Heart right ventricle (tissue), 16 donors: ENCODE measurements at regions of chr12 and their contacts with region 1.

Region 1: GRCh38 chr12:105420659-105421240 is 90.3 kb downstream of the C12orf75 start:
- DNase-seq: peak; percentile 59 to 78
- ATAC-seq: peak; percentile 76 to 94 (median 91)
- H3K4me3 ChIP-seq: no peak overlapping the region
- H3K27ac ChIP-seq: no peak overlapping the region
- H3K4me1 ChIP-seq: peaks cover 0 to 10% (median 0%) of the 10 kb centered on the region in 9 donors
- H3K27me3 ChIP-seq: no peaks in the 10 kb centered on the region
- CTCF ChIP-seq: peak; percentile 74 to 99 (median 93)

Region 2: GRCh38 chr12:105357162-105357691 is 63.5 kb before region 1 on chr12:
- intact Hi-C with region 1: no loop called
- DNase-seq: no peak
- ATAC-seq: no peak
- H3K4me3 ChIP-seq: no peak overlapping the region
- H3K27ac ChIP-seq: no peak overlapping the region
- H3K4me1 ChIP-seq: peaks cover 0 to 11% (median 9%) of the 10 kb centered on the region in 9 donors
- H3K27me3 ChIP-seq: no peaks in the 10 kb centered on the region
- CTCF ChIP-seq: no peak

Region 3: GRCh38 chr12:105485321-105485910 is 64.7 kb after region 1 on chr12:
- intact Hi-C with region 1: loop called in 1 of 10 experiments (anchors 10 kb)
- DNase-seq: peak; percentile 25 to 37
- ATAC-seq: peak; percentile 43 to 95 (median 87)
- H3K4me3 ChIP-seq: no peak overlapping the region
- H3K27ac ChIP-seq: peak overlapping the region in 7 of 10 donors; percentile 9 to 65 (median 45)
- H3K4me1 ChIP-seq: peaks cover 0 to 32% (median 16%) of the 10 kb centered on the region in 9 donors
- H3K27me3 ChIP-seq: no peaks in the 10 kb centered on the region
- CTCF ChIP-seq: no peak

Region 4: GRCh38 chr12:105705765-105706164 is 285.0 kb after region 1 on chr12:
- intact Hi-C with region 1: loop called in 5 of 10 experiments (anchors 5 to 10 kb)
- DNase-seq: peak in 1 of 2 donors; percentile 74
- ATAC-seq: peak; percentile 34 to 79 (median 62)
- H3K4me3 ChIP-seq: no peak overlapping the region
- H3K27ac ChIP-seq: peak overlapping the region in 8 of 10 donors; percentile 22 to 64 (median 46)
- H3K4me1 ChIP-seq: peaks cover 0 to 21% (median 12%) of the 10 kb centered on the region in 9 donors
- H3K27me3 ChIP-seq: no peaks in the 10 kb centered on the region
- CTCF ChIP-seq: peak; percentile 62 to 95 (median 87)

Region 5: DNA sequence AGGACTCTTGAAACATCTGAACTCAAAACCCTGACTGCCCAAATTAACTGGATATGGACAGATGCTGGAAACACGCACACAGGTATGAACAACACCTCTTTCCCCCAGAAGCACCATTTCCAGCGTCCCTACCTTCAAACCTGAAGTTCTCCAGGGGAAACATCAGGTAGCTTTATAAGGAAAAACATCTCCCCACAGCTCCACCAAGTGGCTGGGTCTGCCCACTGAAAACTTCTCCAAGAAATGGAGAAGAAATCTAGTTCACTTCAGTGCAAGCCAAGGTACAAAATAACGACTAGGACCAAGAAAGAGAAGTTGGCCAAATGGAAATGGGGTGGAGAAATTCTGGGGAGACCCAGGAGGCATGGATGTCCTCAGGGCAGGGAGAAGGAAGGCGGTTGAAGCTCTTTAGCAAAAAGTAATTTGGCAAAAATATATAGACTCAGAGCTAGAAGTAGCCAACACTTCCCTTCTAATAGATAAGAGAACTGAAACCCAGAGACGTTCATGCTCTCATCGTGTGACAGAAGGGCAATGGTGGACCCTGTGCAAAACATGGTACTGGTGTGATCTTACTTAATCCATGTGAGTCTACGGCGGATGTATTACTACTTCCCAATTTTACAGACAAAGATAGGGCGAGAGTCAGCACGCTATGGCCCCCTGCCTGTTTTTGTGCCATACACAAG is 728.5 kb after region 1 on chr12:
- intact Hi-C with region 1: loop called in 2 of 10 experiments (anchors 5 kb)
- DNase-seq: no peak
- ATAC-seq: no peak
- H3K4me3 ChIP-seq: no peak overlapping the region
- H3K27ac ChIP-seq: peak overlapping the region in 2 of 10 donors; percentile 78 to 80
- H3K4me1 ChIP-seq: peaks cover 11 to 51% (median 30%) of the 10 kb centered on the region in 9 donors
- H3K27me3 ChIP-seq: no peaks in the 10 kb centered on the region
- CTCF ChIP-seq: peak in 8 of 9 donors; percentile 23 to 72 (median 54)

Region 6: GRCh38 chr12:106205208-106206071 is 784.7 kb after region 1 on chr12:
- intact Hi-C with region 1: loop called in 4 of 10 experiments (anchors 2 to 10 kb)
- DNase-seq: peak; percentile 51 to 70
- ATAC-seq: peak; percentile 89 to 100 (median 98)
- H3K4me3 ChIP-seq: no peak overlapping the region
- H3K27ac ChIP-seq: no peak overlapping the region
- H3K4me1 ChIP-seq: no peaks in the 10 kb centered on the region
- H3K27me3 ChIP-seq: no peaks in the 10 kb centered on the region
- CTCF ChIP-seq: peak; percentile 16 to 67 (median 46)

Region 7: DNA sequence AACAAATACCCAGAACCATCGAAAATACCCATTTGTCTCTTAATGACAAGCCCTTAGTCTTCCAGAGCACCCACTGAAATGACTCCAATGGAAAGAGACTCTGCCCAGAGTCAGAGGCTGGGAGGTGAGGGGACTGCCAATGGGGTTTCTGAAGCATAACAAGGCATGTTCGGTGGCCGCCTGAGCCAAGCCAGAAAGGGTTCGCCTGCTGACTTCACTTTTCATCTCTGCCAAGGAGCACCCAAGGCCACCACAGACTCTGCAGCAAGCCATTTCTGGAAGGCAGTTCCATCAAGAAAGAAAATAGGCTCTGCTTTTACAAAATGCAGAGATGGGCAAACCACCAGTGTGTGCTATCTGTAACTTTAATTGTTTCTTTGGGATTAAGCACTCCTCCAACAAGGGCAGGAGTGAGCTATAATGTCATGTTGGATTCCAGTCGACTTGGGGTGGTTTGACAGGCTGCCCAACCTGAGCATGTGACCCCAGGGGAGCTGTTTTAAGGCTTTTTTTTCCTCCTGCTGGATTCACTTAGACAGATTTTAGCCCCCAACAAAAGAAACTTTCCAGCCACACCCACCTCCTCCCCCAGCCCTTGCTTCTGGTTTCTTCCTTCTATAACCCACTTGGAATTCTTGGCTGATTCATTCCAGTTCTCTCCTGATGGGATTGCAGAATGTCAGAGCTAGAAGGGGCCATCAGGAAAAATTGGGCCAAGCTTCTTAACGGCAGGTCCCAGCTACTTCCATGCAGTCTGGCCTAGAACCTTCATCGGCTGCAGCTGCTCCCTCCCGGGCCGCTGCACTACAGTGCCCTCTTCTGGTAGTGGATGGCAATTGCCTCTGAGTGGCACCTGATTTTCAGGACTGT is 803.0 kb after region 1 on chr12:
- intact Hi-C with region 1: loop called (anchors 2 to 10 kb)
- DNase-seq: peak; percentile 60 to 68
- ATAC-seq: peak; percentile 59 to 86 (median 74)
- H3K4me3 ChIP-seq: no peak overlapping the region
- H3K27ac ChIP-seq: peak overlapping the region in 1 of 10 donors; percentile 24
- H3K4me1 ChIP-seq: peaks cover 0 to 22% (median 7%) of the 10 kb centered on the region in 9 donors
- H3K27me3 ChIP-seq: no peaks in the 10 kb centered on the region
- CTCF ChIP-seq: peak; percentile 93 to 97 (median 95)

Region 8: GRCh38 chr12:106282457-106283097 is 861.8 kb after region 1 on chr12:
- intact Hi-C with region 1: loop called in 1 of 10 experiments (anchors 5 kb)
- DNase-seq: peak; percentile 18 to 23
- ATAC-seq: peak; percentile 49 to 75 (median 58)
- H3K4me3 ChIP-seq: no peak overlapping the region
- H3K27ac ChIP-seq: no peak overlapping the region
- H3K4me1 ChIP-seq: peaks cover 0 to 25% (median 11%) of the 10 kb centered on the region in 9 donors
- H3K27me3 ChIP-seq: no peaks in the 10 kb centered on the region
- CTCF ChIP-seq: peak; percentile 50 to 76 (median 70)